Activated T-helper 1 cell treated with anti-CD3 and anti-CD28 coated beads, Interleukin-12 subunit alpha, Interleukin-12 subunit beta, Interleukin-2, Interleukin-4 antibody, amounts not matched to agents 30 ng/mL and 10 ng/mL and 1 ng/mL, durations not matched to agents 14 hours and 24 hours and 36 hours (primary cell): ENCODE measurements at regions of chr13 and their contacts with region 1.

Region 1: GRCh38 chr13:26208287-26208686 is 13.8 kb downstream of the RNF6 start:
- DNase-seq: no peak
- H3K4me3 Mint-ChIP-seq: no peak overlapping the region
- H3K27ac Mint-ChIP-seq: no peak overlapping the region
- H3K4me1 Mint-ChIP-seq: peaks cover 8% of the 10 kb centered on the region
- H3K27me3 Mint-ChIP-seq: no peaks in the 10 kb centered on the region

Region 2: GRCh38 chr13:25032160-25032559 is 1176.1 kb before region 1 on chr13:
- intact Hi-C with region 1: loop called (anchors 5 kb)
- DNase-seq: no peak
- H3K4me3 Mint-ChIP-seq: no peak overlapping the region
- H3K27ac Mint-ChIP-seq: no peak overlapping the region
- H3K4me1 Mint-ChIP-seq: peaks cover 3% of the 10 kb centered on the region
- H3K27me3 Mint-ChIP-seq: peaks cover 20% of the 10 kb centered on the region